ENCODE measurements at regions of chr3 and their contacts with region 1.

Region 1: DNA sequence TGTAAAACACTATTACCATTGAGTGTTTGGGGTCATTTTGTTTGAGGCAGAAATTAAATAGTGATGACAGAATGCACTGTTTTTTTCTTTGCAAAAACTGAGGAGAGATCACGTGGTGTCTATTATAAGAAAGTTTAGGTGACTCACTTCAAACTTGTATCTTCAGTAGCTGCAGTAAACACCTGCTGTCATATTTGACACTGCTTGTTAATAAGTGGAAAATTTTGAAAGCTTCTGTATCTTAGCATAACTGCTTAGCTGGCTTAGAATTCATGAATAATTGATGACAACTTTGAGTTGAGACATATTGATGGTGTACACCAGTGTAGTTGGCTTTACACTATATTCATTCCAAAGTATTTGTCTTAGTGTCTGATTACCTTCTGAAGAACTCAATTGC is 29.7 kb upstream of the MDFIC2 start:
- DNase-seq: no peak
- ATAC-seq: no peak
- H3K4me3 ChIP-seq: no peak overlapping the region
- H3K27ac ChIP-seq: no peak overlapping the region
- H3K4me1 ChIP-seq: no peaks in the 10 kb centered on the region
- H3K27me3 ChIP-seq: no peaks in the 10 kb centered on the region
- CTCF ChIP-seq: no peak

Region 2: DNA sequence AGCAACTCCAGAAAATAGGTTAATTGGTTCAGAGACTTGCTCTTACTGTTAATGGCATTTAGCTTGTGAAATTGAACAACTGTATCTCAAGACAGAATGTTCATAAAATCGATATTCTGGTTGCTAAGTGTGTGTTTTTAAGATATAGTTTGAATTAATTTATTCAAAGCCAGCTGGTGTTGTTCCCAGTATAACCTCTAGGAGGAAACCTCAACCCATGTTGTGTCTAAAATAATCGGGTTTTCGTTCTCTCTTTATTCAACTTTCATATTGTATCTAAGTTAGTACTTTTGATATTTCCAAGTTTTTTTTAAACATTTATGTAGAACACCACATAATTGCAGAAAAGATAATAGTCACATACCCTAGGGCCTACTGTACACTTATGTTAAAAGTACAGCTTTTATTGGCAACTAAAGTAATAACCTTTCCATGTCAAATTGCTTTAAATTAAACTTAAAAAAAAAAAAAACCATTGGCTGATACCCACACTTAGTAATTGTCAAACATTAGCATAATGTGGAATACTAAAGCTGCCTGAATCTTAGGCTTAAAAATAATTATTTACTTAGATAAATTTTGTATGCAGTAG is 251.7 kb before region 1 on chr3:
- intact Hi-C with region 1: loop called in 1 of 10 experiments (anchors 10 kb)
- DNase-seq: no peak
- ATAC-seq: no peak
- H3K4me3 ChIP-seq: no peak overlapping the region
- H3K27ac ChIP-seq: no peak overlapping the region
- H3K4me1 ChIP-seq: no peaks in the 10 kb centered on the region
- H3K27me3 ChIP-seq: peaks cover 0 to 9% (median 0%) of the 10 kb centered on the region in 7 donors
- CTCF ChIP-seq: peak; percentile 34 to 72 (median 64)